Activated CD8-positive, alpha-beta T cell treated with anti-CD3 and anti-CD28 coated beads, Interleukin-2, amount 10 ng/mL, durations not matched to agents 7 days and 5 days (primary cell): ENCODE measurements at regions of chr1 and their contacts with region 1.

Region 1: DNA sequence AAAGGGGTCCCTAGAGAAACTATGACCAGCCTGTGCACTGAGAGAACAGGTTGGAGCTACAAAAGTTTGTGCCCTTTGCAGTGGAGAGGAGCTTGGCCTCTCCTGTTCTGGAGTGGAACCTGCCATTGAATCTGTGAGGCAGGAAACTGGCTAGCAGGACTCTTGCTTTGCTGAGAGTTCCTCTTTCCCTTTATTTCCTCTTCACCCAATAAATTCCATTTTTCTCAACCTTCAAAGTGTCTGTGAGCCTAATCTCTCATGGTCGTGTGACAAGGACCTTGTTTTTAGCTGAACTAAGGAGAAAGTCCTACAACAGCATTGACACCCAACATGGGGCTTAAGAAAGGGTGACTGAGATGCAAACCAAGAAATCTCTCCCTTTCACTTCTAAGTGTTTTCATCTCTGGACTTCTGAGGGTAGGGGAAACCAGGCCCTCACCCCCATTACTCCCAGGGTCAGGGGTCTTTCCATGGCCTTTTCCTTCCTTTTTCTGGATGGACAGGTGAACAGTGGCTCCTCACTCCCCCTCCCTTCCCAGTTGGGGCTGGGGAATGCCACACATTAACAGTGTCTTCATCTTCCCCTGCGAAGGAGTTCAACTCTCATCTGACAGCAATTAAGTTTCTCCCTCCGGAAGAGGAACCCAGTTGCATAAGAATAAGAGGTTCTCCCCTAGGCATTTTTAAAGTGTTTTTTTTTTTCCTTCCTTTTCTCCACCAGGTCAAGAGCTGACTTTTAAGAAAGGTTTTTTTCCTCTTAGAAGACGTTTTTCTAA is 42.5 kb upstream of the FASLG start:
- DNase-seq: no peak
- ATAC-seq: no peak
- H3K4me3 Mint-ChIP-seq: no peak overlapping the region
- H3K27ac Mint-ChIP-seq: no peak overlapping the region
- H3K4me1 Mint-ChIP-seq: peaks cover 10% of the 10 kb centered on the region
- H3K27me3 Mint-ChIP-seq: no peaks in the 10 kb centered on the region

Region 2: GRCh38 chr1:172442404-172442803 is 174.0 kb before region 1 on chr1:
- CTCF ChIA-PET with region 1: no interaction called
- POLR2A ChIA-PET with region 1: no interaction called
- DNase-seq: no peak
- ATAC-seq: no peak
- H3K4me3 Mint-ChIP-seq: peak overlapping the region; percentile 23
- H3K27ac Mint-ChIP-seq: no peak overlapping the region
- H3K4me1 Mint-ChIP-seq: peaks cover 32% of the 10 kb centered on the region
- H3K27me3 Mint-ChIP-seq: no peaks in the 10 kb centered on the region

Region 3: GRCh38 chr1:172630056-172630818 is 13.9 kb after region 1 on chr1:
- CTCF ChIA-PET with region 1: interaction called, 10 read pairs
- POLR2A ChIA-PET with region 1: no interaction called
- DNase-seq: no peak
- ATAC-seq: no peak
- H3K4me3 Mint-ChIP-seq: no peak overlapping the region
- H3K27ac Mint-ChIP-seq: no peak overlapping the region
- H3K4me1 Mint-ChIP-seq: peaks cover 51% of the 10 kb centered on the region
- H3K27me3 Mint-ChIP-seq: peaks cover 6% of the 10 kb centered on the region